ENCODE measurements at regions of chr17 and their contacts with region 1.

Region 1: GRCh38 chr17:17568749-17569195 is 22.7 kb downstream of the PEMT start:
- DNase-seq: peak; percentile 65 to 79
- ATAC-seq: peak; percentile 36
- H3K4me3 ChIP-seq: no peak overlapping the region
- H3K27ac ChIP-seq: peak overlapping the region; percentile 89 to 96 (median 94)
- H3K4me1 ChIP-seq: peaks cover 56 to 57% of the 10 kb centered on the region in 2 donors
- H3K27me3 ChIP-seq: no peaks in the 10 kb centered on the region
- CTCF ChIP-seq: peak; percentile 80 to 93 (median 90)
- POLR2A ChIP-seq: no peak

Region 2: GRCh38 chr17:17041571-17042380 is 527.0 kb before region 1 on chr17:
- in situ Hi-C with region 1: no loop called
- intact Hi-C with region 1: loop called (anchors 10 kb)
- DNase-seq: peak; percentile 97 to 99
- ATAC-seq: peak; percentile 69 to 78
- H3K4me3 ChIP-seq: peak overlapping the region; percentile 42 to 66 (median 62)
- H3K27ac ChIP-seq: peak overlapping the region; percentile 87 to 99 (median 94)
- H3K4me1 ChIP-seq: peaks cover 52 to 58% of the 10 kb centered on the region in 2 donors
- H3K27me3 ChIP-seq: no peaks in the 10 kb centered on the region
- CTCF ChIP-seq: no peak
- POLR2A ChIP-seq: peak; percentile 45 to 69

Region 3: GRCh38 chr17:17356149-17356930 is 212.4 kb before region 1 on chr17:
- in situ Hi-C with region 1: loop called (anchors 5 to 10 kb)
- intact Hi-C with region 1: loop called (anchors 1 kb)
- DNase-seq: peak; percentile 55 to 77
- ATAC-seq: peak; percentile 79 to 83
- H3K4me3 ChIP-seq: no peak overlapping the region
- H3K27ac ChIP-seq: no peak overlapping the region
- H3K4me1 ChIP-seq: peaks cover 0 to 5% of the 10 kb centered on the region in 2 donors
- H3K27me3 ChIP-seq: no peaks in the 10 kb centered on the region
- CTCF ChIP-seq: peak; percentile 98 to 100 (median 99)
- POLR2A ChIP-seq: no peak

Region 4: GRCh38 chr17:17476865-17477467 is 91.8 kb before region 1 on chr17 and contains the start of gene MED9:
- in situ Hi-C with region 1: no loop called
- intact Hi-C with region 1: loop called (anchors 5 kb)
- DNase-seq: peak; percentile 83 to 91
- ATAC-seq: peak; percentile 96 to 99
- H3K4me3 ChIP-seq: peak within 1 kb of the TSS; percentile 68 to 98 (median 97)
- H3K27ac ChIP-seq: peak within 1 kb of the TSS; percentile 89 to 99 (median 98)
- H3K4me1 ChIP-seq: peaks cover 40 to 46% of the 10 kb centered on the region in 2 donors
- H3K27me3 ChIP-seq: no peaks in the 10 kb centered on the region
- CTCF ChIP-seq: peak in 2 of 5 experiments; percentile 17 to 20
- POLR2A ChIP-seq: peak; percentile 55 to 78
- total RNA-seq, gene MED9: 20.4 to 33.7 (median 27.7) TPM

Region 5: DNA sequence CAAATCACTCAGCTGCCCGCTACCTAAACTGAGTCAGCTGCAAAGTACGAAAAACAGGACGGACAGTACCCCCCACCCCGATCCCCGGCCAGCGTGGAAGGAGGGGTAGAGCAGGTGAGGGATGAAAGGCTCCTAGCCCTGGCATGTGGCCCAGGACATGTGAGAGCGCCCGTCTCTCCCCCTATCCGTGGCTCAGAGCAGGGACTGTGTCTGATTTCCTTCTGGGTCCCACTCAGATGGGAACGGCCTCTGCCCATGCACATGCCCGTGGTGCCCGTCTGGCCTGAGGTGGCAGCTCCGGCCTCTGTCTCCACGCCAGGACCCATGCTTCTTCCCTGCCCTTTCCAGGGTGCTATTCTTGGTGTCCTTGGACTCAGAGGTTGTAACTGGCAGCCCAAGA is 42.4 kb before region 1 on chr17:
- in situ Hi-C with region 1: no loop called
- intact Hi-C with region 1: loop called (anchors 1 kb)
- DNase-seq: peak; percentile 94 to 96
- ATAC-seq: peak; percentile 70 to 83
- H3K4me3 ChIP-seq: peak overlapping the region in 1 of 4 donors; percentile 33
- H3K27ac ChIP-seq: peak overlapping the region; percentile 86 to 97 (median 92)
- H3K4me1 ChIP-seq: peaks cover 24 to 38% of the 10 kb centered on the region in 2 donors
- H3K27me3 ChIP-seq: no peaks in the 10 kb centered on the region
- CTCF ChIP-seq: peak in 1 of 5 experiments; percentile 16
- POLR2A ChIP-seq: peak; percentile 12 to 49

Region 6: DNA sequence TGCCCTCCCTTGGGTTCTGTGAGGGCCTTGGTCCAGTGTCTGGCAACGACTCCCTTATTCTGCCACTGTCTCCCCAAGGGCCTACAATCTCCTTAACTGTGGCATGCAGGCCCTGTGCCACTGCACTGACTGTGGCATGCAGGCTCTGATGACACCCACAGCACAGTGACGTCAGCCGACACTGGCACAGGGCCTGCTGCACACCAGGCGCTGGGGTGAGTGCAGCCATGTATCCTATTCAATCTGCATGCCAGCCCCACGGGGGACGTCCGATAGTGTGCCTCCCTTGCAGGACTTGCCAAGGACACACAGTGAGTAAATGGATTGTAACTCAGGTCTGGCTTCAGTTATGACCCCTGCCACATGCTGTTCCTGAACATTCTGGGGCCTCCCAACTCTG is 32.8 kb before region 1 on chr17:
- in situ Hi-C with region 1: no loop called
- intact Hi-C with region 1: loop called (anchors 1 kb)
- DNase-seq: peak; percentile 88 to 95
- ATAC-seq: peak; percentile 79 to 90
- H3K4me3 ChIP-seq: no peak overlapping the region
- H3K27ac ChIP-seq: peak overlapping the region; percentile 85 to 92 (median 86)
- H3K4me1 ChIP-seq: peaks cover 27 to 41% of the 10 kb centered on the region in 2 donors
- H3K27me3 ChIP-seq: no peaks in the 10 kb centered on the region
- CTCF ChIP-seq: no peak
- POLR2A ChIP-seq: peak; percentile 36

Region 7: GRCh38 chr17:17591355-17592298 is 22.9 kb after region 1 on chr17 and contains the start of gene PEMT:
- in situ Hi-C with region 1: no loop called
- intact Hi-C with region 1: no loop called
- DNase-seq: peak; percentile 97 to 98
- ATAC-seq: peak; percentile 98
- H3K4me3 ChIP-seq: peak within 1 kb of the TSS; percentile 75 to 95 (median 86)
- H3K27ac ChIP-seq: peak within 1 kb of the TSS; percentile 83 to 94 (median 91)
- H3K4me1 ChIP-seq: peaks cover 19 to 22% of the 10 kb centered on the region in 2 donors
- H3K27me3 ChIP-seq: no peaks in the 10 kb centered on the region
- CTCF ChIP-seq: peak in 1 of 5 experiments; percentile 20
- POLR2A ChIP-seq: peak; percentile 60 to 66
- total RNA-seq, gene PEMT: 32.8 to 48.2 (median 34.2) TPM

Measured in gastrocnemius medialis (tissue), 4 donors.